ENCODE measurements at regions of chr11 and their contacts with region 1.

Region 1: GRCh38 chr11:82747471-82747870 is 13.8 kb upstream of the FAM181B start:
- DNase-seq: no peak
- ATAC-seq: no peak
- H3K4me3 ChIP-seq: no peak overlapping the region
- H3K4me3 Mint-ChIP-seq: no peak overlapping the region
- H3K27ac ChIP-seq: no peak overlapping the region
- H3K27ac Mint-ChIP-seq: no peak overlapping the region
- H3K4me1 ChIP-seq: peaks cover 0 to 5% of the 10 kb centered on the region in 2 donors
- H3K4me1 Mint-ChIP-seq: peaks cover 8% of the 10 kb centered on the region
- H3K27me3 ChIP-seq: peaks cover 0 to 4% (median 0%) of the 10 kb centered on the region in 4 experiments
- H3K27me3 Mint-ChIP-seq: peaks cover 36% of the 10 kb centered on the region
- CTCF ChIP-seq: no peak

Region 2: GRCh38 chr11:82080160-82080559 is 667.3 kb before region 1 on chr11:
- CTCF ChIA-PET with region 1: no interaction called
- POLR2A ChIA-PET with region 1: no interaction called
- intact Hi-C with region 1: no loop called
- DNase-seq: no peak
- ATAC-seq: no peak
- H3K4me3 ChIP-seq: no peak overlapping the region
- H3K4me3 Mint-ChIP-seq: no peak overlapping the region
- H3K27ac ChIP-seq: no peak overlapping the region
- H3K27ac Mint-ChIP-seq: no peak overlapping the region
- H3K4me1 ChIP-seq: no peaks in the 10 kb centered on the region
- H3K4me1 Mint-ChIP-seq: no peaks in the 10 kb centered on the region
- H3K27me3 ChIP-seq: no peaks in the 10 kb centered on the region
- H3K27me3 Mint-ChIP-seq: no peaks in the 10 kb centered on the region
- CTCF ChIP-seq: no peak

Region 3: GRCh38 chr11:82802710-82803109 is 55.2 kb after region 1 on chr11:
- CTCF ChIA-PET with region 1: no interaction called
- POLR2A ChIA-PET with region 1: no interaction called
- intact Hi-C with region 1: loop called (anchors 10 kb)
- DNase-seq: no peak
- ATAC-seq: no peak
- H3K4me3 ChIP-seq: no peak overlapping the region
- H3K4me3 Mint-ChIP-seq: no peak overlapping the region
- H3K27ac ChIP-seq: no peak overlapping the region
- H3K27ac Mint-ChIP-seq: no peak overlapping the region
- H3K4me1 ChIP-seq: no peaks in the 10 kb centered on the region
- H3K4me1 Mint-ChIP-seq: no peaks in the 10 kb centered on the region
- H3K27me3 ChIP-seq: peaks cover 0 to 12% (median 4%) of the 10 kb centered on the region in 4 experiments
- H3K27me3 Mint-ChIP-seq: peaks cover 54% of the 10 kb centered on the region
- CTCF ChIP-seq: no peak